GM13977 (cell line): ENCODE measurements at regions of chr4 and their contacts with region 1.

Region 1: DNA sequence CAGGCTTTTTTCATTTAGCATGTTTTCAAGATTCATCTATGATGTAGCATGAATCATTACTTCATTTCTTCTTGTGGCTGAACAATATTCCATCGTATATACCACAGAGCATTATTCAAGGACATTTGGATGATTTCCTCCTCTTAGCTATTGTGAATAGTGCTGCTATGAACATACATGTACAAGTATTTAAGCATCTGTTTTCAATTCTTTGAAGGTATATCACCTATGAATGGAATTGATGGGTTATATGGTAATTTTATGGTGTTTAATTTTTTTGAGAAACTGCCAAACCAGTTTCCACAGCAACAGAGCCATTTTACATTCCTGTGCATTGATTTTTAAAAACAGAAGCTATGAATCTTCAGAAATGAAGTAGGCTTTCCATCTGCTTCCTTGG is 36.1 kb upstream of the WDR19 start:
- DNase-seq: no peak
- CTCF ChIP-seq: no peak

Region 2: DNA sequence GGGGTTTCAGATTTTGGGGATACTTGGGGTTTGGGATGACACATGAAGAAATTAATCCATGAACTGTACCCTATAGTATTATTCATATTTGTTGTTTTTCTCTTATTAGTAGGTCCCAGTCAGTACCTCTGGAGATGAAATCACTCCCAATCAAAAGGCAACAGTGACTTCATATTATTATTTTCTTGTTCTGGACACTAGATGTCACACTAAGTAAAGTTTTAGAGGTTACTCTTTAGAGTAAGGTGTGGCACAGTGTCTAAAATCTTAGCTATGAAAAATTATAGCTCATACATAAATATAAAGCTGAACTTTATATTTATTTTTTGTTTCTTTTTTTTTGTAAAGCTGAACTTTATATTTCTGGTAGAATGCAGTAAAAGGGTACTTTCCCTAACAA is 243.5 kb before region 1 on chr4:
- in situ Hi-C with region 1: loop called (anchors 5 kb)
- DNase-seq: peak; percentile 51
- CTCF ChIP-seq: peak; percentile 39